Activated B cell treated with CpG ODN at 0.5 μM for 24 hours (primary cell): ENCODE measurements at regions of chr1 and their contacts with region 1.

Region 1: DNA sequence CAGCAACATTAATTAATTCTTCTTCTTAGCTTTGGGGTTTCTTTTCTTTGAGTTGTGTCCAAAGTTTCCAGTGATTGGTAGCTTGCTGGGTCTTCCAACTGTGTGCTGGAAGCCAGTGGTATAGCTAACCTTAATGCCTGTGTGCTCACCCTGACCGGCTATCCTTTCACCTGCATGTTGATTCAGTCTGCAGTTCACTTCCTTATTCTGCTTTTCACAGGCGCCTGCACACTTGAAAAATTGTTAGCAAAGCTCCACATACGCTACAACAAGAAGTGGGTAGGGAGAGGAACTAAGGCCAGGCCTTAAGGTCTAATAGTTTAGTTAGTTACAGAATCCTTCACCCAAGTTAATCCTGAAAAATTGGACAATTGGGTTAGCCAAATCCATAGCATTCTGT is 35.7 kb downstream of the NCF2 start:
- DNase-seq: no peak
- ATAC-seq: peak; percentile 69
- H3K4me3 Mint-ChIP-seq: no peak overlapping the region
- H3K27ac Mint-ChIP-seq: peak overlapping the region; percentile 32
- H3K4me1 Mint-ChIP-seq: peaks cover 21% of the 10 kb centered on the region
- H3K27me3 Mint-ChIP-seq: no peaks in the 10 kb centered on the region
- CTCF ChIP-seq: no peak

Region 2: DNA sequence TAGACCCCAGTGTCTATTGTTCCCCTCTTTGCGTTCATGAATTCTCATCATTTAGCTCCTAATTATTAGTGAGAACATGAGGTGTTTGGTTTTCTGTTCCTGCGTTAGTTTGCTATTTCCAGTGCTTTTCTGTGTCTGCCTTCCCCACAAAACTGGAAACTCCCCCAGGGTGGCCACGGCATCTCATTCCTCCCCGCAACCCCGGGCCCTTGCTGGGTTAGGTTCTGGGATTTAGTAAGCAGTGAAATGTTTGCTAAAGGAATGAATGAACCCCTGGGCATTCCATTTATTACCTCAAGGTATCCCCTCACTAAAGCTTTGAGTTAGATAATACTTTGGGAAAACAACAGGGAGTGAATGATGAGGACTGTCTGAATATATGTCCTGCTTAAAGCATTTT is 1305.9 kb before region 1 on chr1:
- CTCF ChIA-PET with region 1: no interaction called
- POLR2A ChIA-PET with region 1: no interaction called
- intact Hi-C with region 1: no loop called
- DNase-seq: no peak
- ATAC-seq: no peak
- H3K4me3 Mint-ChIP-seq: no peak overlapping the region
- H3K27ac Mint-ChIP-seq: no peak overlapping the region
- H3K4me1 Mint-ChIP-seq: no peaks in the 10 kb centered on the region
- H3K27me3 Mint-ChIP-seq: peaks cover 9% of the 10 kb centered on the region
- CTCF ChIP-seq: no peak

Region 3: DNA sequence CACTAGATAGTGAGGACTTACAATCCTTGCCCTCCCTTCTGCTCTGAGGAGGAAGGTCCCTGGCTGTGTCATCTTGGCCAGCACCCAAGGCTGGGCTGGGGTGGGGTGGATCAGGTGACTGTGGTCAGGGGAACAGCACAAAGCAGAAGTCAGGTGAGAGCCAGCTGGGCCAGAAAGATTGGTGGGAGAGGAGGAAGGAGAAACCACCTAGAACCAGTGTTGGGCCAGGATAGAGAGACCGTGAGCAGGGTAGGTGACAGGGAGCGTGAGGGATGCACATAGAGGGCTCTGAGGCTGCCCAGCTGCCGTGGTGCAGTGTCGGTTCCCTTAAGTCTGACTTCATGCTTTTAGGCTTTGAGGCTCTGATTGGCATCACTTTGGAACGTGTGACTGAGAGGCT is 13.0 kb after region 1 on chr1:
- CTCF ChIA-PET with region 1: no interaction called
- POLR2A ChIA-PET with region 1: interaction called, 3 read pairs
- intact Hi-C with region 1: loop called (anchors 2 kb)
- DNase-seq: no peak
- ATAC-seq: peak; percentile 76
- H3K4me3 Mint-ChIP-seq: peak overlapping the region; percentile 42
- H3K27ac Mint-ChIP-seq: peak overlapping the region; percentile 64
- H3K4me1 Mint-ChIP-seq: peaks cover 24% of the 10 kb centered on the region
- H3K27me3 Mint-ChIP-seq: no peaks in the 10 kb centered on the region
- CTCF ChIP-seq: no peak